ENCODE measurements at regions of chr7 and their contacts with region 1.

Region 1: GRCh38 chr7:151336027-151336708 is 5.4 kb upstream of the NUB1 start:
- DNase-seq: no peak
- ATAC-seq: no peak
- H3K4me3 ChIP-seq: no peak overlapping the region
- H3K4me3 Mint-ChIP-seq: no peak overlapping the region
- H3K27ac ChIP-seq: no peak overlapping the region
- H3K27ac Mint-ChIP-seq: no peak overlapping the region
- H3K4me1 ChIP-seq: peaks cover 17 to 19% of the 10 kb centered on the region in 2 donors
- H3K4me1 Mint-ChIP-seq: peaks cover 25% of the 10 kb centered on the region
- H3K27me3 ChIP-seq: no peaks in the 10 kb centered on the region
- H3K27me3 Mint-ChIP-seq: no peaks in the 10 kb centered on the region
- CTCF ChIP-seq: no peak

Region 2: DNA sequence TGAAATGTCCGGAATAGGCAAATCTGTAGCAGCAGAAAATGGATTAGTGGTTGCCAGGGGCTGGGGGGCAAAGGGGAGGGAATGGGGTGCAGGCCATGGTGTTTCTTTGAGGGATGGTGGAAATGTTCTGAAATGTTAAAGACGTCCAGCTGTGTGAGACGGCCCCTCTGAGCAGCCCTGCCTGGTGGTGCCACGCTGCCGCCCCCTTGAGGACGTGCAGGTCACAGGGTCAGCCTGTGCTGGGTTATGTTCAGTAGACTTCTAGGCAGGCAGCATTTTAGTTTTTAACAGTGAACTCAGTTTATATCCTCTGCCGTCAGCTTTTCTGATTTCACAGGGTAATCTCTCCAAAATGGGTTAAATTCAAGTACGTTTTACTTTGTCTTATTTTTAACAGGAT is 14.9 kb after region 1 on chr7:
- CTCF ChIA-PET with region 1: interaction called, 55 read pairs
- POLR2A ChIA-PET with region 1: interaction called, 5 read pairs
- intact Hi-C with region 1: loop called (anchors 2 kb)
- DNase-seq: peak; percentile 47
- ATAC-seq: no peak
- H3K4me3 ChIP-seq: no peak overlapping the region
- H3K4me3 Mint-ChIP-seq: peak overlapping the region; percentile 56
- H3K27ac ChIP-seq: peak overlapping the region; percentile 82 to 99
- H3K27ac Mint-ChIP-seq: peak overlapping the region; percentile 76
- H3K4me1 ChIP-seq: peaks cover 36 to 41% of the 10 kb centered on the region in 2 donors
- H3K4me1 Mint-ChIP-seq: peaks cover 46% of the 10 kb centered on the region
- H3K27me3 ChIP-seq: no peaks in the 10 kb centered on the region
- H3K27me3 Mint-ChIP-seq: no peaks in the 10 kb centered on the region
- CTCF ChIP-seq: no peak

Measured in B cell (primary cell).